Right lobe of liver (tissue), 6 donors: ENCODE measurements at regions of chr15 and their contacts with region 1.

Region 1: DNA sequence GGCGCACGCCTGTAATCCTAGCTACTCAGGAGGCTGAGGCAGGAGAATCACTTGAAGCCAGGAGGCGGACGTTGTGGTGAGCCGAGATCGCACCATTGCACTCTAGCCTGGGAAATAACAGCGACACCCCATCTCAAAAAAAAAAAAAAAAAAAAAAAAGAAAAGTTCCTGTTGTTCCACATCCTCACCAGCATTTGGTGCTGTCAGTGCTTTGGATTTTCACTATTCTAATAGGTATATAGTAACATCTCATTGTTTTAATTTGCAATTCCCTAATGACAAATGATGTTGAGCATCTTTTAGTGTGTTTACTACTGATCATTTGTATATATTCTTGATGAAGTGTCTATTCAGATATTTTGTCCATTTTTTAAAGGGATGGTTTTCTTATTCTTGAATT is 24.6 kb downstream of the UBR1 start:
- DNase-seq: no peak
- ATAC-seq: no peak
- H3K4me3 ChIP-seq: no peak overlapping the region
- H3K27ac ChIP-seq: no peak overlapping the region
- H3K4me1 ChIP-seq: peaks cover 0 to 4% (median 2%) of the 10 kb centered on the region in 4 donors
- H3K27me3 ChIP-seq: no peaks in the 10 kb centered on the region
- CTCF ChIP-seq: no peak
- POLR2A ChIP-seq: no peak

Region 2: DNA sequence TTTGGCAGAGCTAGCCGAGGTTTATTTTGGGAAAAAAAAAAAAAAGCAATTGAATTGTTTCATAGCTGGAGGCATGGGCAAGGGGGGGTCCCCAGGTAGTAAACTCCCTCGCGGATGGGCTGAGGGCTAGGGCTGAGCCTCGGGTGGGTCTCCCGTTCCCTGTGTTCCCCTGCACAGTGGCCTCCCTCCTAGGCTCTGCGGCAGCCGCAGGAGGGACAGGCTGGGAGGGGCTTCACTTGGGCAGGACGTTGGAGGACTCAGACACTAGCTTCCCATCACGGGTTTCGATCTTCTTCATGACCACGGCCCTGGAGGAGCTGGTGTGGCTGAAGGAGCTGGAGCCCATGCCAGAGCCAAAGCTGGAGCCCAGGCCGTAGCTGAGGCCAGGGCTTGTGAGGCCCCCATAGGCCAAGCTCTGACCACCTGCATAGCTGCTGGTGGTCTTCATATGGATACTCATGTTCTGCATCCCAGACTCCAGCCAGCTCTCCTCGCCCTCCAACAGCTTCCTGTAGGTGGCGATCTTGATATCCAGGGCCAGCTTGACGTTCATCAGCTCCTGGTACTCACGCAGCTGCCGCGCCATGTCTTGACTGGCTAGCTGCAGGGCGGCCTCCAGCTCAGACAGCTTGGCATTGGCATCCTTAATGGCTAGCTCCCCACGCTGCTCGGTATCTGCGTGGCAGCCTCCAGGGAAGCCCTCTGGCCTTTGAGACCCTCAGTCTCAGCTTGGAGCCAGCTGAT is 280.4 kb before region 1 on chr15:
- intact Hi-C with region 1: no loop called
- DNase-seq: no peak
- ATAC-seq: no peak
- H3K4me3 ChIP-seq: no peak overlapping the region
- H3K27ac ChIP-seq: no peak overlapping the region
- H3K4me1 ChIP-seq: no peaks in the 10 kb centered on the region
- H3K27me3 ChIP-seq: no peaks in the 10 kb centered on the region
- CTCF ChIP-seq: peak in 2 of 4 donors; percentile 4 to 22
- POLR2A ChIP-seq: no peak

Region 3: GRCh38 chr15:43121863-43122262 is 40.6 kb after region 1 on chr15:
- intact Hi-C with region 1: loop called in 1 of 2 experiments (anchors 5 kb)
- DNase-seq: no peak
- ATAC-seq: no peak
- H3K4me3 ChIP-seq: no peak overlapping the region
- H3K27ac ChIP-seq: no peak overlapping the region
- H3K4me1 ChIP-seq: no peaks in the 10 kb centered on the region
- H3K27me3 ChIP-seq: no peaks in the 10 kb centered on the region
- CTCF ChIP-seq: no peak
- POLR2A ChIP-seq: no peak